Astrocyte of the cerebellum (primary cell): ENCODE measurements at regions of chrX and their contacts with region 1.

Region 1: GRCh38 chrX:130055103-130055502 is 55.2 kb downstream of the ELF4 start:
- DNase-seq: peak; percentile 33
- H3K4me3 ChIP-seq: no peak overlapping the region
- CTCF ChIP-seq: no peak

Region 2: GRCh38 chrX:130009658-130010223 is 45.4 kb before region 1 on chrX:
- in situ Hi-C with region 1: no loop called
- DNase-seq: no peak
- H3K4me3 ChIP-seq: no peak overlapping the region
- CTCF ChIP-seq: no peak

Region 3: DNA sequence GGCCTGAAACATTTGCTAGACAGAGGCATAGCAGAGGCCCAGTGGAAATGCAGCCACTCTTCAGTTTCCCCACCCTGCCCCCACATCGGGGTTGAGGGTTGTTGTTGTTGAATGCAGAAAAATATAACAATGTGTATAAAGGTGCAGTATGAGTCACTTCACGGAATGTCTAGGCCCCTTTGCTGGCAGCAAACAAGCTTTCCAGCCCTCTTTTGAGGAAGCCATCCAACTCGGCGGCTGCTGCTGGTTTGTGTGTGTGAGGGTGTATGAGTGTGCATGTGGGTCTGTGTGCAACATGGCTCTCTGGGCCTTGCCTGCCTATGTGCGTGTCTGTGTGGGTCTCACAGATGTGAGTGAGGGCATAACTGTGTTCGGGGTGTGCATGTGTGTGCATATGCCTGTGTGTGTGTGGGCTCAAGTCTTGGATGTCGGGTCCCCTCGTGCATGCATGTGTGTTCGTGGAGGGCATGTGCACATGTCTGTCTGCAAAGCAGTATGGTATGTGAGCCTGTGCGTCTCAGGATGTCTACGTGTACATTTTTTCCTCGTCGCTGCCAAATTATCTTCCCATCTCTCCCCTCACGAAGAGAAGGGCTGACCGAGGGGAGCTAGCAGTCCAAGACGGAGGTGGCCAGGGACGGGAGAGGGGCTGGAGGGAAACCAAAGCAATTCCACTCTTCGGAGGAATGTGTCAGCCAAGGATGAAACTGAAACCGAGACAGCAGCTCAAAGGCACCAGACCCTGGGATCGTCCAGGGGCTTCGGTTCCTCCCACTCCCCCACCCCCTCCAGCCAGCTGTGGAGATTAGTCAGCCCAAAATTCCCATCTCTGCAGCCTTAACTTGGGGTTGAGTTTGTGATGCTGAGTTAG is 63.6 kb after region 1 on chrX:
- in situ Hi-C with region 1: loop called (anchors 5 kb)
- DNase-seq: peak; percentile 67
- H3K4me3 ChIP-seq: no peak overlapping the region
- CTCF ChIP-seq: no peak